Ovary (tissue), 10 donors: ENCODE measurements at regions of chr18 and their contacts with region 1.

Region 1: DNA sequence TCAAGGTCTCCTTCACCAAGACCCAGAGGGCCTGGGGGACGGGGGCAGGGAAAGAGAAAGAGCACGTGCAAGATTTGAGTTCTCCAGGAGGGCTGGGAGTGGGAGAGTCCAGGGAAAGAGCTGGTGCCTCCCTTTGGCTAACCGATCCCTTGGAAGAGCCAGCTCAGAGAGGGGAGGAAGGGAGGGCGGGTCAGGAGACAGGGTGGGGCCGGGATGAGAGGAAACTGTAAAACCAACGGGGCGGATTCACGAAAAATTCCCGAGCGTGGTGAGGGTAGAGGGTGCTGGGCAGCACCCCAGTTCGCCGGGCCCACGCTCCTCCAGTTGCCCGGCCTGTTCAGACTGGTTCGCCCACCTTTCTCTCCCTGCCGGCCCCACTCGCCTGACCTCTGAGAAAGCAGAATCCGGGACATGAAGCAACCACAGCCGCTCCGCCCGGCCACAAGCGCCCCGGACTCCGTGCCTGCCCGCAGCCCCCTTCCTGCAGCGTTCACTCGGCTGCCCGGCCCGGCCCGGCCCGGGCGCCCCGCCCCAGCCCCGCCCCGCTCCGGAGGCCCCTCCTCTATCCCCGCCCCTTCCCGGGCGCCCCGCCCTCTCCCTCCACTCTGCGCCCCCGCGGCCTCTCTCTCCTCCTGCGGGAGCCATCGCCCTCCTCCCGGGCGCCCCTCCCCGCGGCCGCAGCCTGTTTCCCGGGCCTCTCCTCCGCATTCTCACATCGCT is 230.9 kb upstream of the SMAD2 start:
- DNase-seq: peak; percentile 91 to 95 (median 95)
- H3K4me3 ChIP-seq: peak overlapping the region; percentile 47
- H3K27ac ChIP-seq: peak overlapping the region; percentile 73 to 92
- H3K4me1 ChIP-seq: peaks cover 30% of the 10 kb centered on the region
- H3K27me3 ChIP-seq: no peaks in the 10 kb centered on the region
- CTCF ChIP-seq: no peak
- EP300 ChIP-seq: no peak
- POLR2A ChIP-seq: peak; percentile 53

Region 2: DNA sequence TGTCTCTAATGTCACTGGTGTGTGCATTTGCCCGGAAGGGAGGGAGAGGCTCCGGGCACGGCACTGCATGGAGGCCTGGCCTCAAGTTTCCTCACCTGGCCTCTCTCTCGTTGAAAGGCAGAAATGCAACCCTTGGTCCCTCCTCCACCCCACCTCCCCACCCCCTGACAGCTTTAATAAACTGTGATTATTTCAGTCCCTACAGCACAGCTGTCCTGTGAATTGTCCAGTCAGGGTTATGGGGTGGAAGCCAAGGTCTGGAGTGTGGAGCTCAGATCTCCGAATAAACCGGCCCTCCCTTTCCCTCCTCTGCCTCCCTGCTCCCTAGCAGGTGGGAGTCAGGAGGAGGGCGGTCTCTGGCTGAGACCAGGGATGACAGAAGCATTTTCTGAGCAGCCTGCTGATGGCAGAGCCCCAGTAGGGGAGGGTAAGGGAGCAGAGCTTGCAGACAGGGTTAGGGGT is 31.7 kb before region 1 on chr18:
- intact Hi-C with region 1: loop called in 1 of 4 experiments (anchors 5 kb)
- DNase-seq: peak; percentile 41 to 70 (median 59)
- H3K4me3 ChIP-seq: no peak overlapping the region
- H3K27ac ChIP-seq: peak overlapping the region in 1 of 2 donors; percentile 31
- H3K4me1 ChIP-seq: no peaks in the 10 kb centered on the region
- H3K27me3 ChIP-seq: no peaks in the 10 kb centered on the region
- CTCF ChIP-seq: no peak
- EP300 ChIP-seq: no peak
- POLR2A ChIP-seq: no peak

Region 3: DNA sequence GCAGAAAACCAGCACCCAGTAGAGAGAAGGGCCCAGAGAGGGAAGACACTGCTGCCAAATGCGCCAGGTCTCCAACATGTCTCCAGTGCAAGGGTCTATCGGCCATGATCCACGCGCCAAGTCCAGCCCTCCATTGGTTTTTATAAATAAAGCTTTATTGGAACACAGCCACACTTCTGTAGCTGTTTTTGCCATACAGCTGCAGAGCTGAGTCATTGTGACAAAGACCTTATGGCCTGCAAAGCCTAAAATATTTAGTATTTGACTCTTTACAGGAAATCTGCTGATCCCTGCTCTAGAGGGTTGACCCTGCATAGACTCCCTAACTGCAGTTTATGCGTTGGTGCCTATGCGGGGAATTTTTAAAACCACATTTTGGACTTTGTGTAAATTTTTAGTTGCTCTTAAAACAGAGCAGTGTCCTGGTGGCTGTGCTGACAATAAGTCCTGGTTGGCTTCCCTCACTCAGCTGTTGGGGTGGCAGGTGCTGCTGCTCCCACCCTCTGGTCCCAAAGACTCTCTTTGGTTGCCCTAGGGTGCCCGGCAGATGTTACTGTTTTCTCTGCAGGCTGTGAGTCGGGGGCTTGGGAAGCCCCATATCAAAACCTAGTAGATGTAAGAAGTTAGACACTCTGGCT is 532.4 kb after region 1 on chr18:
- intact Hi-C with region 1: no loop called
- DNase-seq: no peak
- H3K4me3 ChIP-seq: no peak overlapping the region
- H3K27ac ChIP-seq: no peak overlapping the region
- H3K4me1 ChIP-seq: no peaks in the 10 kb centered on the region
- H3K27me3 ChIP-seq: no peaks in the 10 kb centered on the region
- CTCF ChIP-seq: no peak
- EP300 ChIP-seq: no peak
- POLR2A ChIP-seq: no peak